Aorta (tissue), 5 donors: ENCODE measurements at regions of chr5 and their contacts with region 1.

Region 1: DNA sequence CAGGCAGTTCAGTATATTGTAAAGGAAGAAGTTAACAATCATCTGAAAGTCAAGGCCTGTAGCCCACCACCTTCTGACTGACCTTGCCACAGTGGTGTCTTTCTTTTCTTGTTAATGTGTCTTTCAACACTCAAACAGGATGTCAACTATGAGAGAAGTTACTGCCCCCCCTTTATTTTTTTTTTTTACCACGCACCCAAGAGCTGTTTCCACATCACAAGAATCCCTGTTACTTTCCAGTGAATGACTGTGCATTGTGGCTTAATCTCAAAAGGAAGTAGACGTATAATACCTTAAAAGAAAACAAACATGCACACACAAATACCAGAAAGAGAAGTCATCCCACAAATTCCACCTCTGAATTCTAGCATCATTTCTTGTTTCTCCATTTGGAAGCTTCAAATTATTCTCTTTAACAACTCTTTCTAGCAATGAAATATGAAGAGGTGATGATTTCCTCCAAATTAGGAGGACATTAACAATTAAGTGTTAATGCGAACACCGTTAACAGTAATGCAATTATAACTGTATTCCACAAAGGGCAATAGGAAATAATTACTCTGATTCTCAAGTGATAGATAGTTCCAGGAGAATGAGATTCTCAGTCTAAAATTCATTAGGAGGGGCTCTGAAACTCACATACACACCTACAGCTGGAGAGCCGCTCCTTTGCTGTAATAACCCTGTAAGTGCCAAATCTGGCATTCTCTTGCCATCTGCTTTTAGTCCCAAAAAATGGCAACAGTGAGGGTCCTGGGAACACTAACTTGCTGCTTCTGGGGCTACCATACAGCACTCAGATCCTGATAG is 201.0 kb downstream of the EFNA5 start:
- DNase-seq: no peak
- ATAC-seq: no peak
- H3K4me3 ChIP-seq: no peak overlapping the region
- H3K27ac ChIP-seq: peak overlapping the region; percentile 42 to 70
- H3K4me1 ChIP-seq: peaks cover 1 to 16% of the 10 kb centered on the region in 2 donors
- H3K27me3 ChIP-seq: no peaks in the 10 kb centered on the region

Region 2: DNA sequence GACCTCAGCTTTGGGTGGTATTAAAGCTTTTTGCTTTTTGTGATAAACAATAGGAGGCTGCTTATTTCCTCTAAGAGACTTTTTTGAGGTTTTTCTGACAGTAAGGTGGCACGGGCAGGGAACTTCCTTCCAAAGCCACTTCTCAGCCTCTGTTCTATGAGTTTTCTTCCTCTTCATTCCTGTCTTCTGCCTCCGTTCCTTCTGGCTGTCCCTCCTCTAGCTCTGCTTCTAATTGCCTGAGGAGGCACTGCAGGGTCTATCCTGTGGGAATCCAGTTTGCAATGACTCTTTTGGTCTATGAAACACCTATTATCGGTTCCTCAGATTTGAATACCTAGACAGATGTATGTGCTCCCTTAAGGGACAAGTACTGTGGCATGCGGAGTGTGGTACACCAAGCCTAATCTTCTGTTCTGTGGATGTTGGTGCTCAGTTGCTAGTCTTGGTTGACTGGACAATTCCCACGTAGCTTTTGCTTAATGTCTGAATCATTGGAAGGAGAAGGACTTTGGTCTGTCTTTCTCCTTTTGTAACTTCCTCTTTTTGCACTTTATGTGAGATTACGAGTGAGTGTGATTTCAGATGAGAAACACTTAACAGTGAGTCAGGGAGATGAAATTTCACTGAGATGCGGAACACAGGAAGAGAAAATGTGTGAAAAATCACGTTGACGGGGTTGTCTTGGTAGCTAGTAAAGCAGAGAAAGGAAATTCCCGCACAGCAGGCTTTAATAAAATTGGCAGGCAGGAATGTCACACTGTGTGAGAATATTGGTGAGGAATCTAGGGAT is 104.2 kb before region 1 on chr5:
- intact Hi-C with region 1: no loop called
- DNase-seq: no peak
- ATAC-seq: no peak
- H3K4me3 ChIP-seq: no peak overlapping the region
- H3K27ac ChIP-seq: no peak overlapping the region
- H3K4me1 ChIP-seq: no peaks in the 10 kb centered on the region
- H3K27me3 ChIP-seq: no peaks in the 10 kb centered on the region

Region 3: DNA sequence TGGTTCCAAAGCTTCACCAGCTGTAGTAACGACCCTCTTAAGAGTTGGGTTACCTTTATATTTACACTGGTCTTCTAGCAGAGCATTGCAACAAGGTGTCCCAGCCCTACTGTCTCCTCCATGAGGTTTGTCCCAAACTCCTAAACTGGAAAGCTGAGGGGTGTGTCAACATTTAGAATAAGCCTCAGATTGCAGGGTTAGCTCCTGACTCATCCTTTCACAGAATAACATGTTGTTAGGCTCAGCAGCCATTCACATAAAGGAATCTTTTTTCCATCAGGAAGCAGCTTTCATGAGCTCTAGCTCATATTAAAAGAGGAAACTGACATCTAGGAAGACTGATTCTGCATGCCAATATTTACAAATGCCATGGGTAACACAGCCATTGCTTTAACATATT is 37.7 kb before region 1 on chr5:
- intact Hi-C with region 1: loop called (anchors 5 kb)
- DNase-seq: no peak
- ATAC-seq: no peak
- H3K4me3 ChIP-seq: no peak overlapping the region
- H3K27ac ChIP-seq: no peak overlapping the region
- H3K4me1 ChIP-seq: no peaks in the 10 kb centered on the region
- H3K27me3 ChIP-seq: no peaks in the 10 kb centered on the region